ENCODE measurements at regions of chr16 and their contacts with region 1.

Region 1: GRCh38 chr16:87387942-87388817 is 4.0 kb upstream of the MAP1LC3B start:
- DNase-seq: peak; percentile 46 to 95 (median 88)
- ATAC-seq: peak; percentile 75
- H3K4me3 ChIP-seq: peak overlapping the region; percentile 27
- H3K4me3 Mint-ChIP-seq: peak overlapping the region; percentile 27 to 78 (median 68)
- H3K27ac ChIP-seq: peak overlapping the region; percentile 86
- H3K27ac Mint-ChIP-seq: peak overlapping the region; percentile 87 to 99 (median 96)
- H3K4me1 ChIP-seq: peaks cover 17 to 29% of the 10 kb centered on the region in 2 donors
- H3K4me1 Mint-ChIP-seq: peaks cover 15 to 55% (median 44%) of the 10 kb centered on the region in 7 donors
- H3K27me3 ChIP-seq: no peaks in the 10 kb centered on the region
- H3K27me3 Mint-ChIP-seq: peaks cover 0 to 2% (median 0%) of the 10 kb centered on the region in 5 donors

Region 2: DNA sequence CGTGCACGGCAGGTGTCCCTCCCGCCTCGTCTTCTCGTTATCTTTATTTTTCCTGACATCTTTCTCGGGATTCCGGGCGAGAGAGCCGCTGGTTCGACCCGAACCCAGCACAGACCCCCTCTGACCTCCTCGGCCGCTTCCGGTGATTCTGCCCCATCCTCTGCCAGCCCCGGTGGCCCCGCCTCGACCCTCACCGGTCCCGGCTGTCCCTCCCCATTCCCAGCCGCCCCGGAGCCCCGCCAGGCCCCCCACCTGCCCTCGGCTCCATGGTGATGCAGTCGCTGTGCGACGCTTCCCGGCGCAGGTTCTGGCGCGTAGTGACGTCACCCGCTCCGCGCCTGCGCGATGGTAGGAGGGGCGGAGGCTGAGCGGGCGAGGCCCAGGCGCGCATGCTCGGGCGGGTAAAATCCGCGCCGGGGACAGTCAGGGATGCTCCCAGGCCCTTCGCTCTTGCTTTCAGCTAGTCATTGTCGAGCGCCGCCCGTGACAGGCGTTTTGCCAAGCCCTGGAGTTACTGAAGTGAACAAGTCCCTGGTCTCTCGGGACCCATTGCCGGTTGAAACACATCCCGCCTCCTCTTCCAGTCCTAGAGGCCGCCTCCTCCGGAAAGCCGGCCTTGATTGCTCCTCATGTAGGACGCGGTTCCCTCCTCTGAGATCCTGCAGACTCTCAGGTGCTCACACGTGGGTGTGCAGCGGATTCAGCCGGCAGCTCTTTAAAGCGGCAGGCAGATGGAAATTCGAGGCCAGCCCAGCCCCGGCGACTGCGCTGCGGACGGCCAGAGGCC is 833.1 kb before region 1 on chr16 and contains the start of gene MTHFSD:
- CTCF ChIA-PET with region 1: no interaction called
- POLR2A ChIA-PET with region 1: no interaction called
- intact Hi-C with region 1: loop called (anchors 2 to 10 kb)
- DNase-seq: peak; percentile 90 to 100 (median 96)
- ATAC-seq: peak; percentile 97
- H3K4me3 ChIP-seq: peak within 1 kb of the TSS; percentile 96
- H3K4me3 Mint-ChIP-seq: peak within 1 kb of the TSS; percentile 79 to 96 (median 94)
- H3K27ac ChIP-seq: peak within 1 kb of the TSS; percentile 96
- H3K27ac Mint-ChIP-seq: peak within 1 kb of the TSS; percentile 92 to 98 (median 97)
- H3K4me1 ChIP-seq: peaks cover 0 to 5% of the 10 kb centered on the region in 2 donors
- H3K4me1 Mint-ChIP-seq: peaks cover 8 to 36% (median 35%) of the 10 kb centered on the region in 7 donors
- H3K27me3 ChIP-seq: no peaks in the 10 kb centered on the region
- H3K27me3 Mint-ChIP-seq: peaks cover 0 to 7% (median 4%) of the 10 kb centered on the region in 5 donors
- total RNA-seq, gene MTHFSD: 17.6 to 46.7 (median 29.9) TPM

Region 3: DNA sequence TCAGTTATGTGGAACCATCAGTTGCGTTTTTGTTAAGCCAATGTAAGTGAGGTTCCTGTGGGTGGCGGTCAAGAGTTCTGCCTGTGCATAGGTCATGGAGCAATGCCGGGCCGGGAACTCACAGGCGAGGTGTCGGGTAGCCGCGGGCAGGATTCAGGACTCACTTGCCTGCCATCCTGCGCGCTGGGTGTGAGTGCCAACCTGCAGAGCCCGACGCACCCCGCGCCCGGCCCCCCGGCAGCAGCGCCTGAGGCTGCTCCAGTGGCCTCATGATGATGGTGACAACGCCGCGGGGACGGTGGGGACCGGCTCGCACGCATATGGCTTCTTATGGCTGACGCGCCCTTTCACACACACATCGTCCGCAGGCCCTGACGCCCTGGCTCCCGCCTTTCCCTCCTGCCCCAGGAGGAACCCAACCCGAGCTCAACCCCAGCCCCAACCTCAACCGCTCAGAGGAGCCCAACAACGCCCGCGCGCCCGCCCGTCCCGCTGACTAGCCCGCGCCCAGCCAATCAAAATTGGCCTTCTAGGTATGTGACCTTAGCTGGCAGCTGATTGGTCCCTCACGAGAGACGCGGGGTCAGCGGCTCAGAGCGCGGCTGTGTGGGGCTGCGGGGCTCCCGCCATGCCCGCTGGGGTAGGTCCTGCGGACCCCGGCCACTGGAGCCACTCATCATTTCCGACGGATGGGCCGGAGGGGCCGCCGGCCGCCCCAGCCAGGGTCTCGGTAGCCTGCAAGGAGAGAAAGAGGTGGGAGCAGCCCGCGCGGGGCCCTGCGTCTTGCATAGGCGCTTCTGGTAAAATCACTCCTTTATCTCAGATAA is 71.0 kb before region 1 on chr16 and contains the start of gene C16orf95:
- CTCF ChIA-PET with region 1: no interaction called
- POLR2A ChIA-PET with region 1: interaction called, 30 read pairs
- intact Hi-C with region 1: loop called (anchors 1 kb)
- DNase-seq: peak; percentile 93 to 100 (median 96)
- ATAC-seq: peak; percentile 96
- H3K4me3 ChIP-seq: peak within 1 kb of the TSS; percentile 86
- H3K4me3 Mint-ChIP-seq: peak within 1 kb of the TSS; percentile 92 to 100 (median 97)
- H3K27ac ChIP-seq: peak within 1 kb of the TSS; percentile 91
- H3K27ac Mint-ChIP-seq: peak within 1 kb of the TSS; percentile 91 to 99 (median 94)
- H3K4me1 ChIP-seq: peaks cover 8 to 11% of the 10 kb centered on the region in 2 donors
- H3K4me1 Mint-ChIP-seq: peaks cover 11 to 23% (median 16%) of the 10 kb centered on the region in 7 donors
- H3K27me3 ChIP-seq: no peaks in the 10 kb centered on the region
- H3K27me3 Mint-ChIP-seq: peaks cover 0 to 2% (median 0%) of the 10 kb centered on the region in 5 donors
- total RNA-seq, gene C16orf95: 1.3 to 8.6 (median 2.6) TPM

Region 4: GRCh38 chr16:87344931-87345631 is 43.1 kb before region 1 on chr16:
- CTCF ChIA-PET with region 1: no interaction called
- POLR2A ChIA-PET with region 1: interaction called, 5 read pairs
- intact Hi-C with region 1: loop called (anchors 1 to 5 kb)
- DNase-seq: peak in 7 of 9 donors; percentile 36 to 61 (median 41)
- ATAC-seq: peak; percentile 68
- H3K4me3 ChIP-seq: no peak overlapping the region
- H3K4me3 Mint-ChIP-seq: peak overlapping the region in 9 of 10 donors; percentile 43 to 84 (median 81)
- H3K27ac ChIP-seq: peak overlapping the region; percentile 55
- H3K27ac Mint-ChIP-seq: peak overlapping the region; percentile 74 to 99 (median 93)
- H3K4me1 ChIP-seq: peaks cover 5 to 8% of the 10 kb centered on the region in 2 donors
- H3K4me1 Mint-ChIP-seq: peaks cover 4 to 34% (median 16%) of the 10 kb centered on the region in 7 donors
- H3K27me3 ChIP-seq: no peaks in the 10 kb centered on the region
- H3K27me3 Mint-ChIP-seq: no peaks in the 10 kb centered on the region

Region 5: DNA sequence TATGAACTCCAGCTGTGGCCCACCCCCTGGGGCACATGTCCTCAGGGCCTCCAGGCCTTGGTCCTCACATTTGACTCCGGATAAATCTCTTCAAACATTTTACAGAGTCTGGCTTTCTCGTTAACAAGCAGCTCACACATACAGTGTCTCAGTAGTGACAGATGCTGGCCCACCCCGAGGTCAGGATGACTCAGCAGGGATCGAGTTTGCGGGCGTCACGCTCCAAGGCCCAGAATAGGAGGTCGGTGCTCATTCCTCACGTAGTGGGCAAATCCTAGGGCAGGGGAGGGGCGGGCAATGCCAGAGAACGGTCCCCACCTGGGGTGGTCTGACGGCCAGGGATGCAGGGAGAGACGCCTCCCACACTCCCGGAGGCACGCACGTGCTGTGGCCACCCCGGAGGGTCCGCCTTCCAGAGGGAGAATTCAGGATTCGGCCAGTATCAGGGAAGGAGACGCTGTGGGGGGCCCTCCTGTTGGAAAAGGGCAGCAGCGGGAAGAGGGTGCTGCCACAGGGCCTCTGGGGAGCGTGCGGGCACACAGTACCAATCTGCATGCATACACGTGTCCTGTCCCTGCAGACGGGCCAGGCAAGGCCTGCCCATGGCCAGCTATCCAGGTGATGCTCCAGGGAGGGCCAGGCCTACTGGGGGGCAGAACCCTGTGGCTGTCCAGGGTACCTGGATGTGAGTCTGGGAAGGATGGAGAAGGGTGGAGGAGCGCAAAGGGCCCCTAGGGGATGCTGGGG is 472.5 kb after region 1 on chr16:
- CTCF ChIA-PET with region 1: no interaction called
- POLR2A ChIA-PET with region 1: no interaction called
- intact Hi-C with region 1: loop called in 1 of 2 experiments (anchors 10 kb)
- DNase-seq: no peak
- ATAC-seq: no peak
- H3K4me3 ChIP-seq: no peak overlapping the region
- H3K4me3 Mint-ChIP-seq: peak overlapping the region in 1 of 10 donors; percentile 37
- H3K27ac ChIP-seq: no peak overlapping the region
- H3K27ac Mint-ChIP-seq: peak overlapping the region in 4 of 9 donors; percentile 28 to 81 (median 76)
- H3K4me1 ChIP-seq: peaks cover 5 to 19% of the 10 kb centered on the region in 2 donors
- H3K4me1 Mint-ChIP-seq: peaks cover 4 to 70% (median 11%) of the 10 kb centered on the region in 7 donors
- H3K27me3 ChIP-seq: no peaks in the 10 kb centered on the region
- H3K27me3 Mint-ChIP-seq: no peaks in the 10 kb centered on the region

Measured in naive thymus-derived CD4-positive, alpha-beta T cell (primary cell).